GM18951 (cell line): ENCODE measurements at regions of chr17 and their contacts with region 1.

Region 1: GRCh38 chr17:55513885-55514591 is 2.8 kb upstream of the SMIM36 start:
- POLR2A ChIP-seq: no peak

Region 2: GRCh38 chr17:54992797-54993639 is 521.0 kb before region 1 on chr17:
- in situ Hi-C with region 1: loop called (anchors 25 kb)
- POLR2A ChIP-seq: no peak

Region 3: GRCh38 chr17:55416470-55417052 is 97.5 kb before region 1 on chr17:
- in situ Hi-C with region 1: loop called (anchors 5 kb)
- POLR2A ChIP-seq: no peak